Dorsolateral prefrontal cortex (tissue), 120 donors: ENCODE measurements at regions of chr4 and their contacts with region 1.

Region 1: DNA sequence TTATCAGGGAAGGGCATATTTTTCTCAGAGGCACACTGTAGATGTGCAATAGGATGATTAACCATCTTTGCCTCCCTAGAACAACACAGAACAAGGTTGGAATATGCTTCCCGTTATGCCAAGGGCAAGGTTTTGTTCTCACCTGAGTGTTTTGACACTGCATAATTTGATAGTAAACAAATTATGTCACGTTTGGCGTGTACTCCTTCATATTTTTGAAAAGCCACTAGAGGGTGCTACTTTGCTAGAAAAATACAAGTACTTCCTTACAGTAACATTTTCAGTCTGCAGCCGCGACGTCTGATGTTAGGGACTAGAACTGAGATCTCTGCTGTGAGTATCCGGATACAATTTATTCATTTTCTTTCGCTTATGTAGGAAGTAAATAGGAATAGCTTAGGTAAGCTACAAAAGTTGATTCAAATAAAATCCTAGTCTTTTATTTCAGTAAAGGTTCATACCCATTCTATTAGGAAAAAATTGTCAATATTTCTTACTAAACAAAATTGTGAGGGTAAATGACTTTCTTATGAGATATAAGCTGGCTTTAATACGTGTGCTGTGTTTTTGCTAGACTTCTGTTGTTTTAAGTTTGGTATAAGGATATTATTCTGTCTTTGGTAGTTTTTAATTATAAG is 181.1 kb upstream of the WDFY3 start:
- DNase-seq: peak in 7 of 10 donors; percentile 18 to 78 (median 59)
- H3K4me3 ChIP-seq: peak overlapping the region in 54 of 59 donors; percentile 6 to 59 (median 40)
- H3K27ac ChIP-seq: peak overlapping the region in 6 of 59 donors; percentile 4 to 54 (median 14)
- H3K27me3 ChIP-seq: no peaks in the 10 kb centered on the region
- CTCF ChIP-seq: peak; percentile 63 to 97 (median 81)

Region 2: GRCh38 chr4:85370430-85371032 is 223.0 kb after region 1 on chr4:
- intact Hi-C with region 1: loop called in 1 of 2 experiments (anchors 10 kb)
- DNase-seq: peak in 4 of 10 donors; percentile 27 to 38 (median 30)
- H3K4me3 ChIP-seq: no peak overlapping the region
- H3K27ac ChIP-seq: peak overlapping the region in 1 of 59 donors; percentile 49
- H3K27me3 ChIP-seq: no peaks in the 10 kb centered on the region
- CTCF ChIP-seq: peak in 54 of 56 donors; percentile 16 to 73 (median 59)

Region 3: DNA sequence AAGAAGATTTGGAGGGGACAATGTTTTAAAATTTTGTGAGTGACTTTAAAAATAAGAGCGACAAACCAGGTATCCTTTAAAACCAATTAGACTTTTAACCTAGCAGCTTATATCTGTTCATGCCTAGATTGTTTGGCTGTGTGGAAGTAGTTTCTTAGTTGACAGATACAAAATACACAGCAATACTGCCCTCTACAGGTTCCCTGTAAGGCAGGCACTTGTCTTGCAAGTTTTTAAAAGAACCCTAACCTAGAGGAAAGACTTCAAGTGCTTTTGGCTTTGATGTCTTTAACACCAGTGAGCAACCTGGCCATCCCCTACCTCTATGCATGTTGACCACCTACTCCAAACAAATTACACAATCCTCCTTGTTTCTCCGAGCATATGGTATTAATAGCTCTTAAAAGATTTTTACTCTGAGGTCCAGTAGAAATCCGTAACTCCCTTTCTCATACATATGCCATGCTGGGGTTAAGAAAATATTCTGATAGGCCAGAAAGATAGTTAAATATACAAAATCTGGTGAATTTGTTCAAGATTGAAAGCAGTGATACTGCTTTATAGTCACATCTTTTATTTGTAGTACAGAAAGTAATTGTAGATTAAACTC is 600.4 kb after region 1 on chr4:
- intact Hi-C with region 1: loop called (anchors 5 kb)
- DNase-seq: peak in 3 of 10 donors; percentile 24 to 71 (median 26)
- H3K4me3 ChIP-seq: no peak overlapping the region
- H3K27ac ChIP-seq: peak overlapping the region in 7 of 59 donors; percentile 5 to 46 (median 33)
- H3K27me3 ChIP-seq: no peaks in the 10 kb centered on the region
- CTCF ChIP-seq: peak; percentile 62 to 96 (median 90)

Region 4: DNA sequence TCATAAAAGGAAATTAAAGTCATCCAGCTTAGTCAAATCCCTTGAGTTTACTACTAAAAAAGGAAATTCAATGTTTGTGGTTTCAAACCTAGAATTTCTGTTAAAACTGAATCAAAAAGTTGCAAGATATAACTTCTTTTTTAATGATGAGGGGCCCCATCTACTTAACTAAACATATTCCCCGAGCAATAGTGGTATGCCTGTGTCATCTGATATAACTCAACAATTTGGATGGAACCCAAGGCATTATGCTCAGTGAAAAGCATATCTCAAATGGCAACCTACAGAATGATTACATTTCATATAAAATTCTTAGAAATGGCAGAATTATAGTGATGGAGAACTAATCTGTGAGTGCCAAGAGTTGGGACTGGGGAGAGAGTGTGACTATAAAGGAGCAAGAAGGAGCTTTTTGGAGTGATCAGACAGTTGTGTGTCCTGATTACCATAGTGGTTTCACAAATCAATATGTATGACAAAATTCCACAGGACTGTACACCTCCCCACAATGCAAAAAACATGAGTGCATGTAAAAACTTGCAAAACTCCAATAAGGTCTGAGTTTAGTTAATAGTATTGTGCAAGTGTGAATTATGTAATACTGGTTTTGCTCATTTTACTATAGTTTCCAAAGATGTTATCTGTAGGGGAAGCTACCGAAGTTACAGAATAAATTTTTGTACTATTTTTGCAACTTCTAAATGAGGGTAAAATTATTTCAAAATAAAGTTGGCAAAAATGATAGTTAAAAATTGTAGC is 650.6 kb after region 1 on chr4:
- intact Hi-C with region 1: loop called in 1 of 2 experiments (anchors 5 kb)
- DNase-seq: no peak
- H3K4me3 ChIP-seq: no peak overlapping the region
- H3K27ac ChIP-seq: no peak overlapping the region
- H3K27me3 ChIP-seq: no peaks in the 10 kb centered on the region
- CTCF ChIP-seq: no peak

Region 5: DNA sequence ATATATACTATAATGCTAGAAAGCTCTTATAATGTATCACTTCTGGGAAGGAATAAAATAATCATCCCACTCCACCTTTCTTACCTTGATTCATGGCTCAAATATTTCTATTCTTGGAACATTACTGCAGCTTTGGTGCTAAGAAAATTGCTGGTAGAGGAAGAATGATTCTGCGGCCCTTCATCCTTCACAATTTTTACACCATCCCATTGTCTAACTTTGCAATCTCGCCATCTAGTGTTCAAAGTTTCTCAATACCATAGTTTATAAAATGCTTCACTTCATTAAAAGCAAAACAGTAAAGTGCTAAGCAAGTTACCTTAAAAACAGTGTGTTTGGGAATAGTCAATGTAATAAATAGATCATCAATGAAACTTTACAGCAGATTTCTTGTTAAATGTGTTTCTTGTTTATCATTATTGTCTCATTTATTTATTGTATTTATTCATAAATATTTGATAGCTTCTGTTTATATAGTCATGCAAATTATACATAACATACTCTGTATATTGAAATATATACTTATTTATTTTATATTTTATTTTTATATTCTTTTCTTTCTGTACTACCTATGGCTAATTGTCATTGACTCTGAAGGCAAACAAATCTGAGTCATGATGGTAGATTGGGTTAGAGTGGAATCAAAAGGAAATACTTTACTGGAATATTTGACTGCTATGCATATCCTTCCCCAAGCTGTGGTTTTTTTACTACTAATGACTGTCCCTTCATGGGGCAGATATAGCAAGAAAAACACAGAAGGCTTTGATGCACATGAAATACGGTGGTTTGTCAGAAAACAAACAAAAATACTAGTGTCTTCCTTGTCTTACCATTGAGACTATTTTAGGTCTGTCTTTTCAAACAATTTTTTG is 821.6 kb after region 1 on chr4:
- intact Hi-C with region 1: loop called in 1 of 2 experiments (anchors 10 kb)
- DNase-seq: no peak
- H3K4me3 ChIP-seq: no peak overlapping the region
- H3K27ac ChIP-seq: no peak overlapping the region
- H3K27me3 ChIP-seq: no peaks in the 10 kb centered on the region
- CTCF ChIP-seq: peak; percentile 51 to 89 (median 71)